Lower lobe of right lung (tissue), 2 donors: ENCODE measurements at regions of chr12 and their contacts with region 1.

Region 1: GRCh38 chr12:48750769-48751735 is 34.5 kb upstream of the CCNT1 start:
- DNase-seq: no peak
- ATAC-seq: peak; percentile 54 to 77
- H3K4me3 ChIP-seq: no peak overlapping the region
- H3K27ac ChIP-seq: peak overlapping the region; percentile 4
- H3K4me1 ChIP-seq: no peaks in the 10 kb centered on the region
- H3K27me3 ChIP-seq: no peaks in the 10 kb centered on the region
- CTCF ChIP-seq: no peak

Region 2: DNA sequence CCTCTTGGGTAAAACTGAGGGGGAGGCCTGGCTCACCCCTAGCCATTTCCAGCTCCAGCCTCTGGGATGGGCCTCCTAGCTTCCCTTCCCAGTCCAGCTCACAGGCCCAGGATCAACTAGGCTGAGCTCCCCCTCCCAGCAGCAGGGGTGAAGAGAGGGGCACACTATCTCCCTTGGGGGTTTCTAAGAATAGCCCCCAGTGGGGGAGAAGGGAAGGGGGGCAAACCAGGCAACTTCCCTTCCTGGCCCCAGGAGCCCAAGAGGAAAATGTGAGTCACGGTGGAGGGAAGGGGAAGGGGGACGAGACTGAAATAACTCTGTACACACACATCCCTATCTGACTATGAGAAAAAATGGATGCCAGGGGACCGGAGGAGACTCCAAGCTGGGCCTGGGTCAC is 28.8 kb after region 1 on chr12:
- intact Hi-C with region 1: no loop called
- DNase-seq: no peak
- ATAC-seq: no peak
- H3K4me3 ChIP-seq: no peak overlapping the region
- H3K27ac ChIP-seq: no peak overlapping the region
- H3K4me1 ChIP-seq: peaks cover 26% of the 10 kb centered on the region
- H3K27me3 ChIP-seq: no peaks in the 10 kb centered on the region
- CTCF ChIP-seq: no peak

Region 3: GRCh38 chr12:48795480-48796455 is 44.7 kb after region 1 on chr12:
- intact Hi-C with region 1: loop called (anchors 5 kb)
- DNase-seq: no peak
- ATAC-seq: peak; percentile 94 to 96
- H3K4me3 ChIP-seq: no peak overlapping the region
- H3K27ac ChIP-seq: no peak overlapping the region
- H3K4me1 ChIP-seq: peaks cover 10% of the 10 kb centered on the region
- H3K27me3 ChIP-seq: peaks cover 5% of the 10 kb centered on the region
- CTCF ChIP-seq: peak; percentile 94